ENCODE measurements at regions of chr11 and their contacts with region 1.

Region 1: DNA sequence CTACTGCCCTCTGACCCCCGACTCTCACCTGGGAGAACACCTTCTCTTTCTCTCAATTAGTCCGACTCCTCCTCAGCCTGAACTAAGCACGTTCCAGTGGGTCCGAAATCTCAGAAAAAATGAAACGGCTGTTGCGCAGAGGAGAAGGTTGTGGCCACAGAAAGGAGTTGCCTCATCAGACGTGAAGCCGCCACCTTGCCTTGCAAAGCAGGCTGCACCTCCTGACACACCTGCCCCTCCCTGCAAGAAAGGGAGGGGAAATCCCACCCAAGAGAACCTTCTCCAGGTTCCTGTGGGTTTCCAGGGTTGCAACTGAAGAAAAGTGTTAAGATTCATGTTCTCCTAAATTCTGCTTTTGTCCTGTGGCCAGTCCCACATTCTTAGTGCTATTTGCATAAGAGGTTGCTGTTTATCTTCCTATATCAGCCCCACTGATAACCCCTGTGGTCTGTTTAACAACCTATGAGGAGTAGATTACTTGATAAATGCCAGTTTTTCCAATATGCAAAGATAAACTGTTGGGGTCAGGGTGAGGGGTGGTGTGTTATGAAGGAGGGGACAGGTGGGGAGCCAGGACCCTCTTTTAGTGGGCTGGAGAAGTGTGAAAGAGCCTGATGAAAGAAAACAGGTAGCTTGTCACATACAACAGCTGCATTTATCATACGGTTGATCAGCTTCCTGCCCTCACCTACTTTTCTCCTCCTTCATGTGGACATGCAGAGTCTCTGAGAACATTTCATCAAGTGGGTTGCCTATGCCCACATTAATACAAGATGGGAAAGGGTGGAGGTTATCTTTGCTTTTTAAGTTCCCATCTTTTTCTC is 18.2 kb downstream of the ZBTB16 start:
- DNase-seq: peak; percentile 54
- ATAC-seq: peak; percentile 37
- H3K4me3 Mint-ChIP-seq: peak overlapping the region; percentile 44
- H3K27ac Mint-ChIP-seq: peak overlapping the region; percentile 72
- H3K4me1 Mint-ChIP-seq: peaks cover 73% of the 10 kb centered on the region
- H3K27me3 Mint-ChIP-seq: peaks cover 23% of the 10 kb centered on the region

Region 2: DNA sequence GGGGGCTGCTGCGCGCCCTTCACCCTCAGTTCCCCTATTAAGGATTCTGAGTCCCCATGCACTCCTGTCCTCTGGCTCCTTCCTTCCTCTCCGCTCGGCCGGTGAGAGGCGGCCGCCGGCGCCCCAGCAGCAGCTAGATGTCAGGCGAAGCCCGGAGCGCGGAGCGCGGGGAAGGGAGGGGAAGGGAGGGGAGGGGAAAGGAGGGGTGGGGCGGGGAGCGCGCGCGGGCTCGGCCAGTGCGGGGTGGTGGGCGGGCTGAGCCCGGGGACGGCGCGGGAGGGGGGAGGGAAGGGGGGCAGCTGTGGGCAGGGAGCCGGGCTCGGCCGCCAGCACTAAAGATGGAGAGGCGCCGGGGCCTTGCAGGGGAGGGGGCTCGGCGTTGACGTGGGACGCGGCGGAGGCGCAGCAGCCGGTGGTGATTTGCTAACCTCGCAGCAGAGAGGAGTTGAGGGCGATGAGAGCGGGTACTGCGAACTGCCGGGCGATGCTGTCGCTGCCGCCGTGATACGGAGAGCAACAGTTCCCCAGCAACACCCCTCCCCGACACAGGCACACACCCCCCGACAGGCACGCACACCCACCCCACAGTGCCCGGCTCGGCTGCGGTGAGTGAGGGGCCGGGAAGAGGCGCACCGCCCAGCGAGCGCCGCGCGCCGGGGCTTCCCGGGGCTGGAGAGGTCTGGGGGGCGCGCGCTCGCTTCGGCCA is 18.3 kb before region 1 on chr11 and contains the start of gene ZBTB16:
- CTCF ChIA-PET with region 1: interaction called, 17 read pairs
- DNase-seq: no peak
- ATAC-seq: peak; percentile 54
- H3K4me3 Mint-ChIP-seq: peak within 1 kb of the TSS; percentile 74
- H3K27ac Mint-ChIP-seq: peak within 1 kb of the TSS; percentile 45
- H3K4me1 Mint-ChIP-seq: peaks cover 15% of the 10 kb centered on the region
- H3K27me3 Mint-ChIP-seq: peaks cover 75% of the 10 kb centered on the region
- total RNA-seq, gene ZBTB16: 3.2 to 3.9 TPM